Left cardiac atrium (tissue), 4 donors: ENCODE measurements at regions of chr4 and their contacts with region 1.

Region 1: DNA sequence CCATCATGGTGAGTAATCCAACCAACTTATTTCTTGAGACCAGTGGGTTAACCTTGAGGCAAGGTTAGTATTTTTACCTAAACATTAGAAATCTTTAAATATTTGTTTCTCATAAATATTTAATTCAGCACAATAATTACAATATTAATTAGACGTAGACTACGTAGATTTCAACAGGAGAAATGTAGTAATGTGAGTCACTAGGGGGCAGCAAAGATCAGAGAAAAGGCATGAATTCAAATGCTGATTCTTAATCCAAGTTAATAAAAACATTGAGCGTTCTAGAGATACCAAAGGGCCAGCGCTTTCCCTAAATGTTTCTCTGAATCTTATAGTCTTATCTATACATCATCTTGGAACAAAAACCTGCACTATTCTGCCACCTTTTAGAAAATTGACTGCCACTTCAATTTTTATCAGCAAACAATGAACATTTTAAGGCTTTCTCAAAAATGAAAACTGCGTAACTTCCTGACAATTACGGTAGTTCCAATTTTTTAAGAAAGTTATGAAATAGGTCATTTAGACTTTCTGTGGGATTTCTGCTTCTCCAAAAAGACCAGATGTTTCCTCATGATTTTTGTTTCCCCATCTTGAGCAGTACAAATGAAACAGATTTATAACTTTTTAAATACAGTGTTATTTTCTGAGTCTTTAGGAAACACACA is 180.7 kb downstream of the GASK1B start:
- DNase-seq: no peak
- ATAC-seq: peak; percentile 81 to 82

Region 2: GRCh38 chr4:158051401-158052235 is 59.4 kb after region 1 on chr4:
- intact Hi-C with region 1: no loop called
- DNase-seq: peak; percentile 45
- ATAC-seq: peak; percentile 78 to 96

Region 3: DNA sequence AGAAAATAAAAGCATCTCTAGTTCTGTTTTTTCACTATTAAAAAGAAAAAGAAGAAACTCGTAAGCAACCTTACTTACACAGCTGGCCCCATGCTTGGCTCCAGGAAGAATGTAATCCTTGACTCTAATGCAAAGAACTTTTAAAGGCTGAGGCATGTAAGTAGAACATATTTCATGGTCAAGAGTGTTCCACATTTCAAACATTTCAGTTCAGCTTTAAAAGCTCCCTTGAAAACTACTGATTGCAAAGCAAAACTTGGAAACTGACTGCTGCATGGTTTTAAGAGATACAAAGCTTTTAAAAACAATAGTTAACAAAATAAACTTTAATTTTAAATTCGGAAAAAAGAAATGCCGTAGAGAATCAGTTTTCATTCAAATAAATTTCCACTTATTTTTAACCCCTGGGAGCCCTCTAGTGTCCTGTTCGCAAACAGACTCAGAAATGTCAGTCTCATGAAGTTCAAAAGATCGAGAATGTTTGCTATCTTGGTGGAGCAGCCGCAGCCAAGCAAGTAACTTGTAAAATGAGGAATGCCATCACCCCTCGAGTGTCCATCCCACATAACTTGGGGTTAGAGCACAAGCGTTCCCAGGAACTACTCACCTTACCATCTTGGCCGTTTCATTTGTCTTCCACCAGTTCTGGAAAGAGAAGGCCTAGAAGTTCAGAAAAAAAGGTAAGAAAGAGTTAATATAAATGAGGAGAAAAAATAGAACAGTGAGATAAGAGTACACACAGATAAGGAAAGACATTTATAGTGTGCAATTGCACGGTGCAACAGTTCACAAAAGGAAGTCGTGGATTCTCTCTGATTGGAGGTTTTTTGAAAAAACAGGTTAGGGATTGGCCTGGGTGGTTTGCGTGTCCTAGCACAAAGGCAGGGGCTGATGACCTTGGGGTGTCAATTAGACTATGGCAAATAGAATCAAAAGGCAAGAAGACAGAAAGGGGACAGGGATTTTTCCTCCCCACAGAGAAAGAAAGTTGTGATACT is 180.4 kb after region 1 on chr4 and contains the start of gene GASK1B:
- intact Hi-C with region 1: loop called (anchors 2 to 5 kb)
- DNase-seq: no peak
- ATAC-seq: peak; percentile 48 to 64
- total RNA-seq, gene GASK1B: 61.5 to 71.2 TPM

Region 4: DNA sequence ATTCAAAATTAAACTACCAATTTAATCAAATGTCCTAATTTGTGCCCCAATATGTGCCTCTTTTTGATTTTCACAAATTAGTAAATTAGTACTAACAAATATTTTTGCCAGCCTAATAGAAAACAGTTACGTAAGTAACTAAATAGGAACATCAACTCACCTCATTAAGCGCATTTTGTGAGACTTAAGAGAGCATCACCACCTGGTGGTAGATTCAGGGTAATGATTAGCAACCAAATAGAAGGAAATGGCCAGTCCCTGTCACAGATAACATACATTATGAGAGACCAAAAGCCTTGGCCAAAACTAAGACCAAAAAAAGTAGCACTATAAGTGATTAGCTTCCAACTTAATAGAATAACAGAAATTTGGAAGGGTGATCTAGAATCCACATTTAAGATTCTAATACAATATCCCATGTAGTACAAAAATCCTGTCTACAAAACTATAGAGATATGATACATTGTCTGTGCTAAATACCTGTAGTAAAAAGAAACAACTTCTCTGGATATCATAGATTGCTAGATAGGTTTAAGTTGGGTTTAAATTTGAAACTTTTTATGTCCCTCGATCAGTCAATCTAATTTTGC is 632.8 kb after region 1 on chr4:
- intact Hi-C with region 1: loop called in 1 of 2 experiments (anchors 10 kb)
- DNase-seq: no peak
- ATAC-seq: peak; percentile 77 to 81